Activated CD4-positive, alpha-beta T cell treated with anti-CD3 and anti-CD28 coated beads for 36 hours (primary cell): ENCODE measurements at regions of chr6 and their contacts with region 1.

Region 1: GRCh38 chr6:27312146-27312949 is at the start of gene POM121L2:
- DNase-seq: peak; percentile 77
- ATAC-seq: peak; percentile 69
- H3K4me3 Mint-ChIP-seq: peak within 1 kb of the TSS; percentile 71
- H3K27ac Mint-ChIP-seq: no peak within 1 kb of the TSS
- H3K4me1 Mint-ChIP-seq: peaks cover 4% of the 10 kb centered on the region
- H3K27me3 Mint-ChIP-seq: peaks cover 57% of the 10 kb centered on the region
- total RNA-seq, gene POM121L2: not detected

Region 2: GRCh38 chr6:27157459-27158315 is 154.7 kb before region 1 on chr6:
- CTCF ChIA-PET with region 1: no interaction called
- POLR2A ChIA-PET with region 1: no interaction called
- intact Hi-C with region 1: loop called (anchors 2 to 5 kb)
- DNase-seq: peak; percentile 91
- ATAC-seq: peak; percentile 84
- H3K4me3 Mint-ChIP-seq: peak overlapping the region; percentile 78
- H3K27ac Mint-ChIP-seq: peak overlapping the region; percentile 92
- H3K4me1 Mint-ChIP-seq: peaks cover 46% of the 10 kb centered on the region
- H3K27me3 Mint-ChIP-seq: no peaks in the 10 kb centered on the region

Region 3: DNA sequence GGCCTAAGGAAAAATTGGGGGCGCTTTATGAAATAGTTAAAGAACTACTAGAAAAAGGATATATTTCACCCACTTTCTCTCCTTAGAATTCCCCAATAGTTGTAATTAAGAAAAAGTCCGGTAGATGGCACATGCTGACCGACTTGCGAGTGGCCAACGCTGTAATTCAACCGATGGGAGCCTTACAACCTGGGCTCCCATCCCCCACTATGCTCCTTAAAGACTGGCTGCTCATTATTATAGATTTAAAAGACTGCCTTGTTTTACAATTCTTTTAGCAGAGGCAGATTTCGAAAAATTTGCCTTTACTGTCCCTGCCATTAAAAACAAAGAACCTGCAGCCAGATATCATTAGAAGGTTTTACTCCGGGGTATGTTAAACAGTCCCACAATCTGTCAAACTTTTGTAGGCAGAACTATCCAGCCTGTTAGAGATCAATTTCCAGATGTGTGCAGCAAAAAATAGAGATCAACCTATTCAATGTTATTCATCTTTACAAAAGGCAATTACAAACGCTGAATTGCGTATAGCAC is 123.4 kb before region 1 on chr6:
- CTCF ChIA-PET with region 1: interaction called, 4 read pairs
- POLR2A ChIA-PET with region 1: no interaction called
- intact Hi-C with region 1: loop called in 1 of 2 experiments (anchors 1 kb)
- DNase-seq: peak; percentile 75
- ATAC-seq: peak; percentile 89
- H3K4me3 Mint-ChIP-seq: peak overlapping the region; percentile 81
- H3K27ac Mint-ChIP-seq: peak overlapping the region; percentile 76
- H3K4me1 Mint-ChIP-seq: peaks cover 10% of the 10 kb centered on the region
- H3K27me3 Mint-ChIP-seq: peaks cover 2% of the 10 kb centered on the region

Region 4: GRCh38 chr6:27295301-27296081 is 16.9 kb before region 1 on chr6:
- CTCF ChIA-PET with region 1: no interaction called
- POLR2A ChIA-PET with region 1: no interaction called
- intact Hi-C with region 1: no loop called
- DNase-seq: no peak
- ATAC-seq: no peak
- H3K4me3 Mint-ChIP-seq: no peak overlapping the region
- H3K27ac Mint-ChIP-seq: no peak overlapping the region
- H3K4me1 Mint-ChIP-seq: peaks cover 11% of the 10 kb centered on the region
- H3K27me3 Mint-ChIP-seq: peaks cover 72% of the 10 kb centered on the region

Region 5: GRCh38 chr6:27388293-27389197 is 76.2 kb after region 1 on chr6 and contains the start of gene ZNF391:
- CTCF ChIA-PET with region 1: no interaction called
- POLR2A ChIA-PET with region 1: no interaction called
- intact Hi-C with region 1: loop called in 1 of 2 experiments (anchors 2 kb)
- DNase-seq: peak; percentile 81
- ATAC-seq: peak; percentile 95
- H3K4me3 Mint-ChIP-seq: peak within 1 kb of the TSS; percentile 95
- H3K27ac Mint-ChIP-seq: peak within 1 kb of the TSS; percentile 93
- H3K4me1 Mint-ChIP-seq: peaks cover 14% of the 10 kb centered on the region
- H3K27me3 Mint-ChIP-seq: peaks cover 6% of the 10 kb centered on the region
- total RNA-seq, gene ZNF391: 4.3 to 6.2 TPM

Region 6: GRCh38 chr6:27479319-27480182 is 167.2 kb after region 1 on chr6:
- CTCF ChIA-PET with region 1: interaction called, 4 read pairs
- POLR2A ChIA-PET with region 1: no interaction called
- intact Hi-C with region 1: loop called in 1 of 2 experiments (anchors 5 kb)
- DNase-seq: peak; percentile 89
- ATAC-seq: peak; percentile 69
- H3K4me3 Mint-ChIP-seq: no peak overlapping the region
- H3K27ac Mint-ChIP-seq: no peak overlapping the region
- H3K4me1 Mint-ChIP-seq: peaks cover 6% of the 10 kb centered on the region
- H3K27me3 Mint-ChIP-seq: no peaks in the 10 kb centered on the region

Region 7: DNA sequence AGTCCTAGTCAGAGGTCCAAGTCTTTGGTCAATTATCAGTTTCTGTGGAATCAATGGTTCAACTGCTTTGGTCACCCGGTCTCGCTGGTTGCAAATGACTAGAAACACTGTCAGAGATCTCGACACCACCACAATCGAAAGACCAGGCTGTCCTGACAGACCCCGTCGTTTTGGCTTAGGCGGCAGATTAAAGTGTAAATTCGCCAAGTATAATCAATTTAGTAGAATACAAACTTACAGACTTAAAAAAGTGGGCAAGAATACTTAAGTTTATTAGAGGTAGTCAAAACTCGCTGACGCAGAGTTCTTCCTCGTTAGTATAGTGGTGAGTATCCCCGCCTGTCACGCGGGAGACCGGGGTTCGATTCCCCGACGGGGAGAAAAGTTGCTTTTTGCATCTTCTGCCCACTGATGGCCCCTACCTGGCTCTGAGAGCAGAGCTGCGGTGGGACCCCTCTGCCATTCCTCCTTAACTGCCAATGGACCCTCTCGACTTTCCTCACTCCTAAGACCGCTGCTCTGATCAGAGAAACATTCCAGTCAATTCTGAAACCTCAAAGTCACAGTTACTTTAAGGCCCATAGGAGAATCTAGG is 191.2 kb after region 1 on chr6:
- CTCF ChIA-PET with region 1: no interaction called
- POLR2A ChIA-PET with region 1: no interaction called
- intact Hi-C with region 1: loop called in 1 of 2 experiments (anchors 5 kb)
- DNase-seq: peak; percentile 87
- ATAC-seq: peak; percentile 40
- H3K4me3 Mint-ChIP-seq: peak overlapping the region; percentile 88
- H3K27ac Mint-ChIP-seq: peak overlapping the region; percentile 83
- H3K4me1 Mint-ChIP-seq: peaks cover 26% of the 10 kb centered on the region
- H3K27me3 Mint-ChIP-seq: peaks cover 4% of the 10 kb centered on the region

Region 8: GRCh38 chr6:27608916-27609883 is 296.9 kb after region 1 on chr6:
- CTCF ChIA-PET with region 1: interaction called, 9 read pairs
- POLR2A ChIA-PET with region 1: no interaction called
- intact Hi-C with region 1: loop called in 1 of 2 experiments (anchors 2 kb)
- DNase-seq: no peak
- ATAC-seq: no peak
- H3K4me3 Mint-ChIP-seq: no peak overlapping the region
- H3K27ac Mint-ChIP-seq: no peak overlapping the region
- H3K4me1 Mint-ChIP-seq: peaks cover 13% of the 10 kb centered on the region
- H3K27me3 Mint-ChIP-seq: peaks cover 46% of the 10 kb centered on the region